T-cell (primary cell): ENCODE measurements at regions of chr1 and their contacts with region 1.

Region 1: DNA sequence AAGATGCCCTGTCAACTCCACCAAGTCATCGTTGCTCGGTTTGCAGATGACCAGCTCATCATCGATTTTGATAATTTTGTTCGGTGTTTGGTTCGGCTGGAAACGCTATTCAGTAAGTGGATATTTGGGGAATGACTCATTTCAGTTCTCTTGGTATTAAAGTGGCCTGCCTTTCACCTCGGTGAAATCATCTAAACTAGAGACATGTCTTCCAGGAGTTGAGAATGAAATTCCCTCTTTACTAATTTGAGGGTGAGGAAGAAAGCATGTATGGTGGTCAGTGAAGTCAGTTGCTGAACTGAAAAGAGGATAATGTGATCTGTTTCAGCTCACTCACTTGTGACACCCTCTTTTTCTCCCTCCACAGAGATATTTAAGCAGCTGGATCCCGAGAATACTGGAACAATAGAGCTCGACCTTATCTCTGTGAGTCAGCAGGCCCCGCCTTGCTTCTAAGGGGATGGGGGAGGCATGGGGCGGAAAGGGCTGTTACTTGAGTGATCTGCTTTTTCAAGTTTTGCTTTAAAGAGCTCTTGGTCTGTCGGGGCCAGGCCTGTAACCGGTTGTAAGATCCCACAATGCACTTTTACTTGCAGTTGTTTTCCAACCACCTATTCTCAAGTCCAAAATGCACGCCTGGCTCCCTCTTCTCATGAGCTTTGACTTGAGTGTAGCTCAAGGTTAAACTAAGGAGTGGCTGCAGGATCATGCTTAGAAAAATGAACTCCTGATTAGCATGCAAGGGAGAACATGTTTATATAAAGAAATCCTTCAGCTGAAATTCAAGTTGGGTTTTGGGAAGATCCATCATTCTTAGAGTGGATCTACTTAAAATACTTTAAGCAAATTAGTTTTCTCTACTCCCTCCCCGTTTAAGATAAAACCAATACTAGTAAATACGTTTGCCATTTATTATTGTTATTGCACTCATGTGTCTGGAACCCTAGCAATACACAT is 59.8 kb downstream of the CAPN2 start:
- DNase-seq: no peak
- ATAC-seq: no peak
- H3K4me3 ChIP-seq: no peak overlapping the region
- H3K4me3 Mint-ChIP-seq: no peak overlapping the region
- H3K27ac ChIP-seq: no peak overlapping the region
- H3K27ac Mint-ChIP-seq: peak overlapping the region; percentile 68 to 80
- H3K4me1 ChIP-seq: peaks cover 0 to 5% of the 10 kb centered on the region in 2 experiments
- H3K4me1 Mint-ChIP-seq: peaks cover 9 to 35% (median 16%) of the 10 kb centered on the region in 3 donors
- H3K27me3 ChIP-seq: no peaks in the 10 kb centered on the region
- H3K27me3 Mint-ChIP-seq: no peaks in the 10 kb centered on the region

Region 2: GRCh38 chr1:224300314-224300713 is 528.2 kb after region 1 on chr1:
- CTCF ChIA-PET with region 1: no interaction called
- POLR2A ChIA-PET with region 1: interaction called in 1 of 2 experiments, 12 read pairs
- DNase-seq: no peak
- ATAC-seq: no peak
- H3K4me3 ChIP-seq: no peak overlapping the region
- H3K4me3 Mint-ChIP-seq: no peak overlapping the region
- H3K27ac ChIP-seq: no peak overlapping the region
- H3K27ac Mint-ChIP-seq: no peak overlapping the region
- H3K4me1 ChIP-seq: no peaks in the 10 kb centered on the region
- H3K4me1 Mint-ChIP-seq: peaks cover 0 to 1% (median 0%) of the 10 kb centered on the region in 3 donors
- H3K27me3 ChIP-seq: no peaks in the 10 kb centered on the region
- H3K27me3 Mint-ChIP-seq: no peaks in the 10 kb centered on the region